B cell (primary cell): ENCODE measurements at regions of chr1 and their contacts with region 1.

Region 1: DNA sequence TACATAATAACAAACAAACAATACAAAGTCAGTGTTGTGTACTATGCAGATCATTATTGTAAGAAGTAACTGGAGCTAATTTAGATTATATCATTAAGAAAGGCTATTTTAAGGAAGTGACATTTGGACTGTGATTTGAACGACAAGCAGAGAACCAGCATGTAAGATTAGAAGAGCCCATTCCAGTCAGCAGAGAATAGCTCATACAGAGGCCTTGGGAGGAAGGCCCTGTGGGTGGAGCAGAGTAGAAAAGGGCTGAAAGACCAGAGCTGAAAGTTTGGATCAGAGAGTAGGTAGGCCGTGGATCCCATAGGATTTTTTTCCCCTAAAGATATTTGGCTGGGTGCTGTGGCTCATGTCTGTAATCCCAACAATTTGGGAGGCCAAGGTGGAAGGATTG is 190.1 kb downstream of the OMA1 start:
- DNase-seq: no peak
- ATAC-seq: no peak
- H3K4me3 ChIP-seq: no peak overlapping the region
- H3K4me3 Mint-ChIP-seq: no peak overlapping the region
- H3K27ac ChIP-seq: no peak overlapping the region
- H3K27ac Mint-ChIP-seq: no peak overlapping the region
- H3K4me1 ChIP-seq: no peaks in the 10 kb centered on the region
- H3K4me1 Mint-ChIP-seq: peaks cover 3% of the 10 kb centered on the region
- H3K27me3 ChIP-seq: no peaks in the 10 kb centered on the region
- H3K27me3 Mint-ChIP-seq: no peaks in the 10 kb centered on the region
- CTCF ChIP-seq: no peak

Region 2: DNA sequence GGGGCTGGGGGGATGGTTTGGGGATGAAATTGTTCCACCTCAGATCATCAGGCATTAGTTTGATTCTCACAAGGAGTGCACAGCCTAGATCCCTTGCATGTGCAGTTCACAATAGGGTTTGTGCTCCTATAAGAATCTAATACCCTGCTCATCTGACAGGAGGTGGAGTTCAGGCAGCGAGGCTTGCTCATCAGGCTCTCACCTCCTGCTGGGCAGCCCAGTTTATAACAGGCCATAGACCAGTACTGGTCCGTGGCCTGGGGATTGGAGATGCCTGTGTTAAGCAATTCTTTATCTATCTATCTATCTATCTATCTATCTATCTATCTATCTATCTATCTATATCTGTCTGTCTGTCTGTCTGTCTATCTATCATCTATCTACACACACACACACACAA is 407.2 kb before region 1 on chr1:
- CTCF ChIA-PET with region 1: no interaction called
- POLR2A ChIA-PET with region 1: interaction called, 10 read pairs
- intact Hi-C with region 1: no loop called
- DNase-seq: no peak
- ATAC-seq: no peak
- H3K4me3 ChIP-seq: no peak overlapping the region
- H3K4me3 Mint-ChIP-seq: no peak overlapping the region
- H3K27ac ChIP-seq: no peak overlapping the region
- H3K27ac Mint-ChIP-seq: no peak overlapping the region
- H3K4me1 ChIP-seq: no peaks in the 10 kb centered on the region
- H3K4me1 Mint-ChIP-seq: no peaks in the 10 kb centered on the region
- H3K27me3 ChIP-seq: no peaks in the 10 kb centered on the region
- H3K27me3 Mint-ChIP-seq: no peaks in the 10 kb centered on the region
- CTCF ChIP-seq: no peak

Region 3: DNA sequence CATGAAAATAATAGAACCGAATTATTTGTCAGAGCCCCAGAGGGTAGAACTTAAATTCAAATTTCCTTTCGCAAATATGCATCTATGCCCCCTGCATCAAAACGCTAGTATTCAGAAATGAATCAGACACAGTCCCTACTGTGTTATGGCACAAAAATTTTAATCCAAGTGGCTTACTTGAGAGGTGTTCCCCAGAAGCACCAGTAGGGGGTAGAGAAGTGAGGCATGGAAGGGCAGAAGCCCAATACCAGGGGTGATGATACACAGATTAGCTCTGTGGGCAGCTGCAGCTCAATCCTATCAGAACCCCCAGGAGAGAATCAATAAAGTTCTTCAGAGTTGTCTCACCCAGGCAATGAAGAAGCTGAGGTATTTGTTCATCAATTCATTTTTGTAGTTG is 152.1 kb before region 1 on chr1:
- CTCF ChIA-PET with region 1: no interaction called
- POLR2A ChIA-PET with region 1: no interaction called
- intact Hi-C with region 1: no loop called
- DNase-seq: no peak
- ATAC-seq: no peak
- H3K4me3 ChIP-seq: no peak overlapping the region
- H3K4me3 Mint-ChIP-seq: no peak overlapping the region
- H3K27ac ChIP-seq: no peak overlapping the region
- H3K27ac Mint-ChIP-seq: no peak overlapping the region
- H3K4me1 ChIP-seq: no peaks in the 10 kb centered on the region
- H3K4me1 Mint-ChIP-seq: no peaks in the 10 kb centered on the region
- H3K27me3 ChIP-seq: no peaks in the 10 kb centered on the region
- H3K27me3 Mint-ChIP-seq: peaks cover 3% of the 10 kb centered on the region
- CTCF ChIP-seq: no peak

Region 4: DNA sequence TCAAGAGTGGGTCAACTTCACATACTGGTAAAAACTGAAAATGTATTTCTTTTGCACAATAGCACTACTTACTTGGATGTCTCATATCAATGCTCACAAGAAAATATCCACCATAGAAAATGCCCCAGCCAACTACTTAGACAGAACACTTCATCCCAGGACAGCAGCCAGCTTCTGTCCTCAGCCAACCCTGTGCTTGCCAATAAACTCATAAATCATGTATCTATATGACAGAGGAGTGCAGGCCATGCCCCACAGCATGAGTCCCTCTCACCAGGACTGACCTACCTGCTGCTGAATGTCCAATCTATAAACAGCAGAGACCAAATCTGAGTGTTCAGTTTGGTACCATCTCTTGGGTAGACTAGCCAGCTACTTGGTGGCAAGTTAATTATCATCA is 10.8 kb after region 1 on chr1:
- CTCF ChIA-PET with region 1: no interaction called
- POLR2A ChIA-PET with region 1: no interaction called
- intact Hi-C with region 1: no loop called
- DNase-seq: no peak
- ATAC-seq: no peak
- H3K4me3 ChIP-seq: no peak overlapping the region
- H3K4me3 Mint-ChIP-seq: no peak overlapping the region
- H3K27ac ChIP-seq: no peak overlapping the region
- H3K27ac Mint-ChIP-seq: no peak overlapping the region
- H3K4me1 ChIP-seq: no peaks in the 10 kb centered on the region
- H3K4me1 Mint-ChIP-seq: no peaks in the 10 kb centered on the region
- H3K27me3 ChIP-seq: no peaks in the 10 kb centered on the region
- H3K27me3 Mint-ChIP-seq: no peaks in the 10 kb centered on the region
- CTCF ChIP-seq: no peak

Region 5: DNA sequence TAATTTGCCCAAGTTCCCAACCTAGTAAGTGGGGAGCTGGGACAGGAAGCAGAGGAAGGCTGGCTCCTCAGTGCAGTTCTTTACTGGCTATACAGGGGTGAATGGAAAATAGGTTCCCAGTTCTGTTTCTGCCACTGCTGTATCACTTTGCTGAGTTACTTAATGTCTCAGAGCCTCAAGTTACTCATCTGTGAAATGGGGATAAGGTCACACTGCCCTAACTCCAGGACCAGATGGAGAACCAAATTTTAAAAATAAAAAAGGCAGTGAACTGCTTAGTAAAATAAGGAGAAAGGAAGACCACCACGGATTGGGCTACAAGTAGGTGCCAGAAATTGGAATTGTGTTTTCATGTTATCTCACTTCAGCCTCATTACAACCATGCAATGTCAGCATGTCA is 42.3 kb after region 1 on chr1:
- CTCF ChIA-PET with region 1: no interaction called
- POLR2A ChIA-PET with region 1: no interaction called
- intact Hi-C with region 1: no loop called
- DNase-seq: no peak
- ATAC-seq: no peak
- H3K4me3 ChIP-seq: no peak overlapping the region
- H3K4me3 Mint-ChIP-seq: no peak overlapping the region
- H3K27ac ChIP-seq: no peak overlapping the region
- H3K27ac Mint-ChIP-seq: no peak overlapping the region
- H3K4me1 ChIP-seq: no peaks in the 10 kb centered on the region
- H3K4me1 Mint-ChIP-seq: no peaks in the 10 kb centered on the region
- H3K27me3 ChIP-seq: no peaks in the 10 kb centered on the region
- H3K27me3 Mint-ChIP-seq: no peaks in the 10 kb centered on the region
- CTCF ChIP-seq: no peak